Naive thymus-derived CD4-positive, alpha-beta T cell (primary cell): ENCODE measurements at regions of chr18 and their contacts with region 1.

Region 1: GRCh38 chr18:48777026-48777743 is 173.6 kb downstream of the SMAD7 start:
- DNase-seq: peak; percentile 40 to 78 (median 67)
- ATAC-seq: peak; percentile 86
- H3K4me3 ChIP-seq: no peak overlapping the region
- H3K4me3 Mint-ChIP-seq: no peak overlapping the region
- H3K27ac ChIP-seq: no peak overlapping the region
- H3K27ac Mint-ChIP-seq: peak overlapping the region in 1 of 9 donors; percentile 13
- H3K4me1 ChIP-seq: peaks cover 4 to 8% of the 10 kb centered on the region in 2 donors
- H3K4me1 Mint-ChIP-seq: peaks cover 0 to 10% (median 5%) of the 10 kb centered on the region in 7 donors
- H3K27me3 ChIP-seq: no peaks in the 10 kb centered on the region
- H3K27me3 Mint-ChIP-seq: peaks cover 0 to 5% (median 0%) of the 10 kb centered on the region in 5 donors

Region 2: GRCh38 chr18:48711651-48712486 is 65.3 kb before region 1 on chr18:
- CTCF ChIA-PET with region 1: no interaction called
- POLR2A ChIA-PET with region 1: no interaction called
- intact Hi-C with region 1: no loop called
- DNase-seq: peak in 5 of 9 donors; percentile 4 to 18 (median 8)
- ATAC-seq: no peak
- H3K4me3 ChIP-seq: no peak overlapping the region
- H3K4me3 Mint-ChIP-seq: no peak overlapping the region
- H3K27ac ChIP-seq: no peak overlapping the region
- H3K27ac Mint-ChIP-seq: no peak overlapping the region
- H3K4me1 ChIP-seq: no peaks in the 10 kb centered on the region
- H3K4me1 Mint-ChIP-seq: peaks cover 0 to 8% (median under 1%) of the 10 kb centered on the region in 7 donors
- H3K27me3 ChIP-seq: no peaks in the 10 kb centered on the region
- H3K27me3 Mint-ChIP-seq: peaks cover 0 to 6% (median 0%) of the 10 kb centered on the region in 5 donors

Region 3: DNA sequence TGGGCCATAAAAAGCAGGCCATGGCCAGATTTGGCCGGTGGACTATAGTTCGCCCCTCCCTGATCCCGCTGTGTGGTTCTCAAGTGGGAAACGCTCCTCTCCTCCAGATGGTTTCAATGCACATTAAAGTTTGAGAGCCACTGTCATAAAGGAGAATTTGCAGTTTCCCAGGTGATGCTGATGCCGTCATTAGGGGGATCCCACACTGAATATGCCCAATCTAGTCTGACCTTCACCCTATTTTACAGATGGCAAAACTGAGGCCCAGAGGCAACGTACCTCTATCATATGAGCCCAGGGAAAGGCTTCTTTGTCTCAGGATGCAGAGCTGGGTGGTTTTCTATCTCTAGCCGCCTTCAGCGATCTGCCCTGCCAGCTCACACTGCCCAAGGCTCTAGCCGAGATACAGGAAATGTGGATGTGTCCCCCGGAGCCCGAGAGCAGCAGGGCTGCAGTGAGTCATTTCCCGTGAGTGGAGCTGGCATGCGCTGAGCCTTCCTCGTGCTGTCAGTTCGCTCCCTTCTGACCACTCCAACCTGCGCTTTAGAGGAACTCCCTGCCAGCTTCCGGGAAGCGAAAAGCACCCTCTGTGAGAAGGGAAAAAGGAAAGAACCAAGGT is 57.3 kb after region 1 on chr18:
- CTCF ChIA-PET with region 1: no interaction called
- POLR2A ChIA-PET with region 1: no interaction called
- intact Hi-C with region 1: loop called (anchors 5 kb)
- DNase-seq: peak in 7 of 9 donors; percentile 20 to 72 (median 34)
- ATAC-seq: peak; percentile 87
- H3K4me3 ChIP-seq: peak overlapping the region; percentile 46
- H3K4me3 Mint-ChIP-seq: peak overlapping the region; percentile 72 to 92 (median 79)
- H3K27ac ChIP-seq: no peak overlapping the region
- H3K27ac Mint-ChIP-seq: peak overlapping the region; percentile 19 to 98 (median 73)
- H3K4me1 ChIP-seq: peaks cover 59 to 93% of the 10 kb centered on the region in 2 donors
- H3K4me1 Mint-ChIP-seq: peaks cover 53 to 85% (median 65%) of the 10 kb centered on the region in 7 donors
- H3K27me3 ChIP-seq: no peaks in the 10 kb centered on the region
- H3K27me3 Mint-ChIP-seq: no peaks in the 10 kb centered on the region

Region 4: DNA sequence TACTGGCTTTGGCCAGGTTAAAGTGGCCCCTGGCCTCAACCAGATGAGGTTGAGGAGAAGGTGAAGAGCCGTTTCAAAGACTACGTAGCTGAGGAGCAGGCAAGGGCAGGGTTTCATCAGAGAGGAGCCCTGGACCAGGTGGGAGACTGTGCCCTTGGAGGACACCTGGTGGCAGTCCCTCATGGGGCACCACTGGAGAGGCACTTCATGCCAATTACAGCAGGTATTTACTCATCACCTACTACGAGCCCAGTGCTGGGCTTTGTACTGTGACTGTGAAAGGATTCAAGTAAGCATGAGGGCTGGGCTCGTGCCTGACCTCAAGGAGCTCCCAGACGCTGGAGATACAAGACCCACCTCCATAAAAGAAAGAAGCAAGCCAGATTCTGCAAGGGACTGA is 136.0 kb after region 1 on chr18:
- CTCF ChIA-PET with region 1: interaction called, 4 read pairs
- POLR2A ChIA-PET with region 1: no interaction called
- intact Hi-C with region 1: loop called (anchors 1 kb)
- DNase-seq: peak in 4 of 9 donors; percentile 32 to 51 (median 44)
- ATAC-seq: peak; percentile 78
- H3K4me3 ChIP-seq: no peak overlapping the region
- H3K4me3 Mint-ChIP-seq: no peak overlapping the region
- H3K27ac ChIP-seq: no peak overlapping the region
- H3K27ac Mint-ChIP-seq: peak overlapping the region in 2 of 9 donors; percentile 28 to 55
- H3K4me1 ChIP-seq: peaks cover 11 to 19% of the 10 kb centered on the region in 2 donors
- H3K4me1 Mint-ChIP-seq: peaks cover 22 to 43% (median 33%) of the 10 kb centered on the region in 7 donors
- H3K27me3 ChIP-seq: no peaks in the 10 kb centered on the region
- H3K27me3 Mint-ChIP-seq: peaks cover 0 to 1% (median 0%) of the 10 kb centered on the region in 5 donors

Region 5: DNA sequence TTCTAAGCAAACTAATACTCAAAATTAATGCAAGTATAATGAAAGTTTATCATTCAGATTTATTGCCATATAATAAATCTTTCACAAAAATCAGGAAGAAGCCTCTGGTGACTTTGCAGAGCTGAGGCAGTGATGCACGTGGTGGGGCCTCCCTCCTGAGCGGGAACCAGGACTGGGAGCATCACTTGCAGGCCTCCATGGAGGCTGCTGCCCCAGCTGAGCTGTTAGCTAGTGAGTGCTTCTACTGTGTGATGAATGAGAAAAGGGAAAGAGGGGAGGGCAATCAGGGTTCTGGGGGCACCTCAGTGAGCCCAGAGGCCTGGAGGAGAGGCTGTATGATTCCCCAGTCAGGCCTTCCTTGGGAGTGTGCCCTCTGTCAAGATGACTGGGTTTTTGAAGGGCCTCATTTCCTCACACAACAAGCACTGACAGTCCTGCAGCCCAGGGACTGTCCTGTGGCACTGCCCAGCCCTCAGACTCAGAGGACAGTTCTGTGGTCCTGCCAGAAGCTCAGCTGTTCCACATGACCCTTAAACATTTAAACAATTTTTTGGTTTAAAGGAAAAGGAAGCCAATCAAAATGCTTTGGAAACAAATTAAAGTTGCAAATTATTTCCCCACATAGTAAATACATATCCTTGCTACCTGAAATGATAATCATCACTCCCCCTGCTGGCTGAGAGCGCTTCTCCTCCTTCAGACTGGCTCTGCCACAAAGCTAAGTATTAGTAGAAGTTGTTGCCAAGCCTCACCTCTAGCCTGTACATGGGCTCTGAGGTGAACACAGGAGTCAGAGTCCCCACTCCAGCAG is 264.5 kb after region 1 on chr18:
- CTCF ChIA-PET with region 1: interaction called, 3 read pairs
- POLR2A ChIA-PET with region 1: no interaction called
- intact Hi-C with region 1: loop called (anchors 1 kb)
- DNase-seq: peak in 8 of 9 donors; percentile 16 to 53 (median 44)
- ATAC-seq: peak; percentile 74
- H3K4me3 ChIP-seq: no peak overlapping the region
- H3K4me3 Mint-ChIP-seq: no peak overlapping the region
- H3K27ac ChIP-seq: no peak overlapping the region
- H3K27ac Mint-ChIP-seq: peak overlapping the region in 1 of 9 donors; percentile 35
- H3K4me1 ChIP-seq: no peaks in the 10 kb centered on the region
- H3K4me1 Mint-ChIP-seq: peaks cover 0 to 10% (median 7%) of the 10 kb centered on the region in 7 donors
- H3K27me3 ChIP-seq: no peaks in the 10 kb centered on the region
- H3K27me3 Mint-ChIP-seq: no peaks in the 10 kb centered on the region

Region 6: GRCh38 chr18:49238433-49239042 is 461.4 kb after region 1 on chr18:
- CTCF ChIA-PET with region 1: no interaction called
- POLR2A ChIA-PET with region 1: no interaction called
- intact Hi-C with region 1: loop called (anchors 5 to 10 kb)
- DNase-seq: peak in 1 of 9 donors; percentile 2
- ATAC-seq: peak; percentile 29
- H3K4me3 ChIP-seq: no peak overlapping the region
- H3K4me3 Mint-ChIP-seq: no peak overlapping the region
- H3K27ac ChIP-seq: no peak overlapping the region
- H3K27ac Mint-ChIP-seq: no peak overlapping the region
- H3K4me1 ChIP-seq: no peaks in the 10 kb centered on the region
- H3K4me1 Mint-ChIP-seq: peaks cover 0 to 3% (median under 1%) of the 10 kb centered on the region in 7 donors
- H3K27me3 ChIP-seq: no peaks in the 10 kb centered on the region
- H3K27me3 Mint-ChIP-seq: no peaks in the 10 kb centered on the region

Region 7: DNA sequence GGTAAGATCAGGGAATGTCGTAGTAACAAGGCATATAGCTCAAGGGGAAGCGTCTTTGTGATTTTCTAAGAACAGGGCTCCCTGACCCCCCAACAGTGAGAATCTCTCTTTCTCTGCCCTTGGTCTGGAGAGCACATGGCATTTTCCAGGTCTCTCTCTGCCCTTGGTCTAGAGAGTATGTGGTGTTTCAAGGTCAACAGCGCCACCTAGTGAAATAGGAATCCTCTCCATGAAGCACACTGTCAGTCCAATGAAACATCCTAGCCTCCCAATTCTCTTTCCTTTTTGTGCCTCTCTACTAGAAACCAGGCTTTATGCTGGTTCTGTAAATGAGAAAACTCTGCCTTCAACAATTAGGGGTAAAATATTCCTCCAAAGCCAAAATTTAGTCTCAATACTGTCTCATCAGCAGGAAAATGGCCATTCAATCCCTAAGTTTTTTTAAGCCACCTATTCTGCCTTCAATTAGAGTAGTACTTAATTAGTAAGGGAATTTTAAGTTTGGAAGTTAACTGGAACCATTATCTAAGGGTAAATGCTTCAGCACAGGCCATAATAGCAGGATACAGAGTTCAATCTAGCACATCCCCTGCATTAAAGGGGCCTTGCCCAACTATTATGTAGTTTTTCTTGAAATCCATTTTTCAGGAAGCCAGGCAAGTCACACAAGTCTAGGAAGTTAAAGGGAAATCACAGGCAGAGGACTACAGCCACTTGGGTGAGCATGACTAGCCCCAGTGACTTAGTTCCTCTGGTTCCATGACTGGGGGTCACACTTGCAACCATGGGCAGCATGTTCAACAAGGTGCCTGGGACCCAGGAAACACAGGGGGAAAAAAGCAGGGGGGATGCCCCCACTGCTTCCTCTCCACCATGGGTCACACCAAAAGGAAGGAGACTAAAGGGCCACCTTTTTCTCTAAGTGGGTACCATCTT is 670.9 kb after region 1 on chr18:
- CTCF ChIA-PET with region 1: interaction called, 4 read pairs
- POLR2A ChIA-PET with region 1: no interaction called
- intact Hi-C with region 1: loop called in 1 of 2 experiments (anchors 2 kb)
- DNase-seq: peak in 8 of 9 donors; percentile 8 to 63 (median 28)
- ATAC-seq: peak; percentile 57
- H3K4me3 ChIP-seq: no peak overlapping the region
- H3K4me3 Mint-ChIP-seq: no peak overlapping the region
- H3K27ac ChIP-seq: no peak overlapping the region
- H3K27ac Mint-ChIP-seq: no peak overlapping the region
- H3K4me1 ChIP-seq: no peaks in the 10 kb centered on the region
- H3K4me1 Mint-ChIP-seq: peaks cover 11 to 48% (median 30%) of the 10 kb centered on the region in 7 donors
- H3K27me3 ChIP-seq: no peaks in the 10 kb centered on the region
- H3K27me3 Mint-ChIP-seq: no peaks in the 10 kb centered on the region